ENCODE measurements at regions of chr1 and their contacts with region 1.

Region 1: GRCh38 chr1:203304919-203305808 is at the start of gene BTG2:
- DNase-seq: peak; percentile 90 to 93
- ATAC-seq: peak; percentile 68 to 79
- H3K4me3 ChIP-seq: peak within 1 kb of the TSS; percentile 80 to 98 (median 94)
- H3K27ac ChIP-seq: peak within 1 kb of the TSS; percentile 95 to 100 (median 98)
- H3K4me1 ChIP-seq: peaks cover 27 to 28% of the 10 kb centered on the region in 2 donors
- H3K27me3 ChIP-seq: no peaks in the 10 kb centered on the region
- CTCF ChIP-seq: no peak
- POLR2A ChIP-seq: peak; percentile 100
- total RNA-seq, gene BTG2: 48.0 to 286 (median 74.9) TPM

Region 2: GRCh38 chr1:203326830-203327683 is 21.9 kb after region 1 on chr1:
- in situ Hi-C with region 1: no loop called
- intact Hi-C with region 1: loop called (anchors 2 kb)
- DNase-seq: peak; percentile 86 to 87
- ATAC-seq: peak; percentile 80 to 91
- H3K4me3 ChIP-seq: peak overlapping the region; percentile 48 to 66 (median 62)
- H3K27ac ChIP-seq: peak overlapping the region; percentile 78 to 90 (median 86)
- H3K4me1 ChIP-seq: peaks cover 24 to 31% of the 10 kb centered on the region in 2 donors
- H3K27me3 ChIP-seq: no peaks in the 10 kb centered on the region
- CTCF ChIP-seq: no peak
- POLR2A ChIP-seq: peak; percentile 39 to 73

Region 3: GRCh38 chr1:203440771-203441170 is 135.6 kb after region 1 on chr1:
- in situ Hi-C with region 1: no loop called
- intact Hi-C with region 1: no loop called
- DNase-seq: peak; percentile 47 to 72
- ATAC-seq: peak; percentile 43 to 69
- H3K4me3 ChIP-seq: no peak overlapping the region
- H3K27ac ChIP-seq: no peak overlapping the region
- H3K4me1 ChIP-seq: no peaks in the 10 kb centered on the region
- H3K27me3 ChIP-seq: no peaks in the 10 kb centered on the region
- CTCF ChIP-seq: peak in 3 of 5 experiments; percentile 34 to 52 (median 44)
- POLR2A ChIP-seq: no peak